Mammary epithelial cell (primary cell): ENCODE measurements at regions of chr6 and their contacts with region 1.

Region 1: DNA sequence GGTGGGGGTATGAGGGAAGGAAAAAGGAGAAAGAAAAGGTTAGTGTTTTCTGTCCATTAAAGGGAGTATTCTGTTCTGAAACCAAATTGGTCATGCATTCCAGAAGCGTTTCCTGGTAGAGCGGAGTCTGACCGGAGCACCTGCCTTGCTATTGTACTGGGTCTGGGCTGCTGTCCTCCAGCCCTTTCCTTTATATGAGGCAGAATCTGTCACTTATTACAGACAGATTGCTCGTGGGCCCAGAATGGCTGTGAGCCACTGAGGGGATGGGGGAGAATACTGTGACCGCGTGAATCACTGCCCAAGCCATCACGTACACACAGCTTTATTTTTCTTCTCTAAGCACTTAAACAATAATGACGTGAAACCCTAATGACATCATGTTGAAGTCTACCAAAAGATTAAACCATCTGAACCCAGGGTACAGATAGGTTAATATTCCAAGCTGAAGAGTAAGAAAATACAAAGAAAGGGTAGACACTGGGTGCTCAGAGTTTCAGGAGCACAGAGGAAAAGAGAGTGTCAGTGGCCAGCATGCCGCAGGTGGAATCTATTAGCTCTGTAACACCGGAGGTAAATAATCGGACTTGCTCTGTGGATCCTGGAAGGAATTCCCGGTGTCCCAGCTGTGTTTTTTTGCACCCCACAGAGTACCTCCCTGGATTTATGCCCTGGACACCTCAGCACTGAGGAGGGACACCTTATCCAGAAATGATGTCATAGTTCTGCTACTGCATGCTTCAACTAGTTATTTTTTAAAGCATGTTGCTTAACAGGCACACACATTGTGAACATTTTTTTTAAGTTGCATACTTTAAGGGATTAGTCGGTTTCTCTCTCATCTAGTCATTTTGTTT is 573.3 kb downstream of the PKHD1 start:
- DNase-seq: peak; percentile 93
- H3K4me3 ChIP-seq: no peak overlapping the region
- H3K27ac ChIP-seq: peak overlapping the region; percentile 45
- H3K4me1 ChIP-seq: peaks cover 13% of the 10 kb centered on the region
- H3K27me3 ChIP-seq: no peaks in the 10 kb centered on the region
- CTCF ChIP-seq: no peak

Region 2: DNA sequence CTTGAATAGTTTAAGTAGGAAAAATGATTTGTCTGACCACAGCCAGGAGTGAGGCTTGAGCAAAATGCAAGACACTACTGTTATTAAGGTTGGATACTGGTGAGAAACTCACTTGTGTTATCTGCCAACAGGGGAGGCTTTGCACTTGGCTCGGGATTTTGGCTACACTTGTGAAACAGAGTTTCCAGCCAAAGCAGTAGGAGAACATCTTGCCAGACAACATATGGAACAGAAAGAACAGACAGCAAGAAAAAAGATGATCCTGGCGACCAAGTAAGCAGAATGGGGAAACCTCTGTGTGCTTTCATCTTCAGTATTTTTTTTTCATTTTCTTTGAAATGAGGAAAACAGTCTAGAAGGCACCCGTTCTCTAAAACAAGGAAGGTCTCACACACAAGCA is 769.1 kb before region 1 on chr6:
- CTCF ChIA-PET with region 1: no interaction called
- dilution Hi-C with region 1: no loop called
- in situ Hi-C with region 1: no loop called
- intact Hi-C with region 1: no loop called
- DNase-seq: no peak
- H3K4me3 ChIP-seq: no peak overlapping the region
- H3K27ac ChIP-seq: no peak overlapping the region
- H3K4me1 ChIP-seq: no peaks in the 10 kb centered on the region
- H3K27me3 ChIP-seq: peaks cover 2% of the 10 kb centered on the region
- CTCF ChIP-seq: no peak

Region 3: GRCh38 chr6:51350308-51350904 is 163.7 kb before region 1 on chr6:
- CTCF ChIA-PET with region 1: interaction called, 13 read pairs
- dilution Hi-C with region 1: no loop called
- in situ Hi-C with region 1: no loop called
- intact Hi-C with region 1: loop called (anchors 1 kb)
- DNase-seq: no peak
- H3K4me3 ChIP-seq: no peak overlapping the region
- H3K27ac ChIP-seq: no peak overlapping the region
- H3K4me1 ChIP-seq: no peaks in the 10 kb centered on the region
- H3K27me3 ChIP-seq: peaks cover 1% of the 10 kb centered on the region
- CTCF ChIP-seq: peak; percentile 57 to 61

Region 4: GRCh38 chr6:51398793-51399192 is 115.3 kb before region 1 on chr6:
- CTCF ChIA-PET with region 1: interaction called, 12 read pairs
- dilution Hi-C with region 1: no loop called
- in situ Hi-C with region 1: no loop called
- intact Hi-C with region 1: no loop called
- DNase-seq: no peak
- H3K4me3 ChIP-seq: no peak overlapping the region
- H3K27ac ChIP-seq: no peak overlapping the region
- H3K4me1 ChIP-seq: no peaks in the 10 kb centered on the region
- H3K27me3 ChIP-seq: no peaks in the 10 kb centered on the region
- CTCF ChIP-seq: no peak

Region 5: DNA sequence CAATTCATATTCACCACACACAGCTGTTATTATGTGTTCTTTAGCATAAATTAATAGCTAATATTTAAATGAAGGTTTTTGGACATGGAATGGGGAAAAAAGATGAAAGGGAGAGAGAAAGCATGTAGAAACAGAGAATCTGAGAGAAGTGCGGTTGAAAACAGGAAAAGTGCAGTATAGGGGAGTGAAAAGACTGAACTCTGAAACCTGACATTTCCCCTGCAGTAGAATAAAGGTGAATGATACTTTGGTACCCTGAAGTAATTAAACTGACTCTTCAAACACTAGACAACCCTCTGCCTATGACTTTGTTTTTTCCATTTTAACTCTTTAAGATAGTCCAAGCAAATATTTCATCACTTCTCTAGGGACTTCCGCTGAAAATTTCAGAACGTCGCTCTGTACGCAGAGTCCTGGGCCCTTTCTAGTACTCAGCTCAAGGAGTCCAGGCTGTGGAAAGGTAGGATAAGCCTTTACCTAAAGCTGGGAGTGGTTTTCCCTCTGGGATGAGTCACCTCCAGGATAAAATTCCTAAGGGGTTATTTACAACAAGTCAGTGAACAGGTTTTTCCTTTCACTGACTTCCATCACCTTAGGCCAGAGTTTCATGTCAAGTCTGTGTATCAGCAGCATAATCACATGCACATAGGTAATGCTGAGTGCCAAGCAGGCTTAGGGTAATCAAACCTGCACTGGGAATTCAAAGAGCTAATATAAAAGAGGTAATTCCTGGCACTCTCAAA is 41.2 kb before region 1 on chr6:
- CTCF ChIA-PET with region 1: interaction called, 3 read pairs
- dilution Hi-C with region 1: no loop called
- in situ Hi-C with region 1: no loop called
- intact Hi-C with region 1: loop called (anchors 5 kb)
- DNase-seq: peak; percentile 88
- H3K4me3 ChIP-seq: no peak overlapping the region
- H3K27ac ChIP-seq: peak overlapping the region; percentile 75
- H3K4me1 ChIP-seq: peaks cover 25% of the 10 kb centered on the region
- H3K27me3 ChIP-seq: no peaks in the 10 kb centered on the region
- CTCF ChIP-seq: no peak